Calu3 (cell line): ENCODE measurements at regions of chr1 and their contacts with region 1.

Region 1: DNA sequence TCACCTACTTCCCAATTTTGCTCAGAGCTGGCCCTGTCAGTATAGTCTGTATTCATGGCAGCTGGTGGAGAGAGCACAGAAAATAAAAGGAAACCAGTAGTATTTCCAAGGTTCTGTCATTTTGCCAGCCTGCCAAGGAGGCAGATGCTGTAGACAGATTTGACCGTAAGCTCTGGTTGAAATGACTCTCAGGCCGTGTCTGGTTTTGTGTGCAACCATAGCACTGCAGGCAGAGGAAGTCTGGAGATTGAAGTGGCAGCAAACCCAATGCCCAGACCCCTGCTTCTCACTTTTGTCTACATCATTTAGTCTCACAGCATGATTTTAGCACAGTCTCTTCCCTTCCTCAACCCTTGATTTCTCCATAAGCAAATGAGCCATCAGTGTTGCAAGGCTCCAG is 291.7 kb downstream of the PAPPA2 start:
- DNase-seq: no peak
- H3K4me3 Mint-ChIP-seq: no peak overlapping the region
- H3K27ac Mint-ChIP-seq: no peak overlapping the region
- H3K4me1 Mint-ChIP-seq: no peaks in the 10 kb centered on the region
- H3K27me3 Mint-ChIP-seq: no peaks in the 10 kb centered on the region
- CTCF ChIP-seq: no peak

Region 2: DNA sequence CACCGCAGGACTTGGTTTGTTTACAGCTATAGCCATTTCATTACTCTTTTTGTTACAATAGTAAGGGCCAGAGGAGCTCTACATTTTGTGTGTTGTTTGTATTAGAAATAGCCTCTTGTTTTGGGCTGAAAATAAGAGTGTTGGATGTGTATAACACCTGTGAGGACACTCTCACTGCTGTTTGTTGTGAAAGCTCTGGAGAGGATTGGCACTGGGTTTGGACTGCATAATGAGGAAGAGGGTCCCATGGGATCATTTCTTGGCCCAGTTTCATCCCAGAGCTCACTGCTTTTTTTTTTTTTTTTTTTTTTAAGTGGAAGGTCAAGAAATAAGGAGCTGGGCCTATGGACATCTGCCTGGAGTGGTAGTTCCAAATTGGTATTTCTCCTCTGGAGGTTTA is 1500.5 kb before region 1 on chr1:
- CTCF ChIA-PET with region 1: interaction called, 15 read pairs
- intact Hi-C with region 1: no loop called
- DNase-seq: no peak
- H3K4me3 Mint-ChIP-seq: no peak overlapping the region
- H3K27ac Mint-ChIP-seq: no peak overlapping the region
- H3K4me1 Mint-ChIP-seq: no peaks in the 10 kb centered on the region
- H3K27me3 Mint-ChIP-seq: peaks cover 19% of the 10 kb centered on the region
- CTCF ChIP-seq: no peak

Region 3: DNA sequence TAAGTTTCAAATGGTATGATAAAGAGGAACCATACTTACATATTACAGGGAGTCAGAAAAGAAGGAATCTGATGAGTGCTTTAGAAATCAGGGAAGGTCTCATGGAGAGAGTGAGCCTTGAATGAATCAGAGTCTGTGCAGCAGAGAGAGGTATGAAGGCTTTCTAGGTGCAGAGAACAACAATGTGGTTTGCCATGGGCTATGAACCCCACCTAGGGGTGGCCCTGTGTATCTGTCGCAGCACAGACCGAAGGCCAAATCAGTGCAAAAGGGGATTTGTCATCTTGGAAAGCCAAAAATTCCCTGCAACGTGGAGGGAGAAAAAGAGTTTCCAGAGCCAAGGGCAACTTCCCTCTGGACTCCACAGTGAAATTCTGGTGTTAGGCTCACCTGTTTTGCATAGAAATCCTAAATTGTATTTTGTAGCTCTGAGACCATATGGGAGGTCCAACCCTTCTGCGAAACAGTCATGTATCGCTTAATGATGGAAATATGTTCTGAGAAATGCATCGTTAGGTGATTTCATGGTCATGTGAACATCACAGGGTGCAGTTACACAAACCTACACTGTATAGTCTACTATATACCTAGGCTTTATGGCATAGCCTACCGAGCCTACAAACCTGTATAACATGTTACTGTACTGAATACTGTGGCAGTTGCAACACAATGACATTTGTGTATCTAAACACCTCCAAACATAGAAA is 288.0 kb before region 1 on chr1:
- CTCF ChIA-PET with region 1: no interaction called
- intact Hi-C with region 1: no loop called
- DNase-seq: peak; percentile 43
- H3K4me3 Mint-ChIP-seq: no peak overlapping the region
- H3K27ac Mint-ChIP-seq: no peak overlapping the region
- H3K4me1 Mint-ChIP-seq: no peaks in the 10 kb centered on the region
- H3K27me3 Mint-ChIP-seq: peaks cover 46% of the 10 kb centered on the region
- CTCF ChIP-seq: peak; percentile 64